CD8-positive, alpha-beta T cell (primary cell): ENCODE measurements at regions of chr11 and their contacts with region 1.

Region 1: GRCh38 chr11:125902927-125903710 is at the start of gene PUS3:
- DNase-seq: peak; percentile 67 to 91 (median 87)
- ATAC-seq: peak; percentile 92
- H3K4me3 ChIP-seq: peak within 1 kb of the TSS; percentile 58 to 77
- H3K4me3 Mint-ChIP-seq: peak within 1 kb of the TSS; percentile 95
- H3K27ac ChIP-seq: peak within 1 kb of the TSS; percentile 48 to 67
- H3K27ac Mint-ChIP-seq: peak within 1 kb of the TSS; percentile 91
- H3K4me1 ChIP-seq: peaks cover 16% of the 10 kb centered on the region
- H3K4me1 Mint-ChIP-seq: peaks cover 41% of the 10 kb centered on the region
- H3K27me3 ChIP-seq: peaks cover 5 to 7% of the 10 kb centered on the region in 2 experiments
- H3K27me3 Mint-ChIP-seq: peaks cover 19% of the 10 kb centered on the region
- CTCF ChIP-seq: no peak
- total RNA-seq, gene PUS3: 4.5 to 5.2 TPM

Region 2: DNA sequence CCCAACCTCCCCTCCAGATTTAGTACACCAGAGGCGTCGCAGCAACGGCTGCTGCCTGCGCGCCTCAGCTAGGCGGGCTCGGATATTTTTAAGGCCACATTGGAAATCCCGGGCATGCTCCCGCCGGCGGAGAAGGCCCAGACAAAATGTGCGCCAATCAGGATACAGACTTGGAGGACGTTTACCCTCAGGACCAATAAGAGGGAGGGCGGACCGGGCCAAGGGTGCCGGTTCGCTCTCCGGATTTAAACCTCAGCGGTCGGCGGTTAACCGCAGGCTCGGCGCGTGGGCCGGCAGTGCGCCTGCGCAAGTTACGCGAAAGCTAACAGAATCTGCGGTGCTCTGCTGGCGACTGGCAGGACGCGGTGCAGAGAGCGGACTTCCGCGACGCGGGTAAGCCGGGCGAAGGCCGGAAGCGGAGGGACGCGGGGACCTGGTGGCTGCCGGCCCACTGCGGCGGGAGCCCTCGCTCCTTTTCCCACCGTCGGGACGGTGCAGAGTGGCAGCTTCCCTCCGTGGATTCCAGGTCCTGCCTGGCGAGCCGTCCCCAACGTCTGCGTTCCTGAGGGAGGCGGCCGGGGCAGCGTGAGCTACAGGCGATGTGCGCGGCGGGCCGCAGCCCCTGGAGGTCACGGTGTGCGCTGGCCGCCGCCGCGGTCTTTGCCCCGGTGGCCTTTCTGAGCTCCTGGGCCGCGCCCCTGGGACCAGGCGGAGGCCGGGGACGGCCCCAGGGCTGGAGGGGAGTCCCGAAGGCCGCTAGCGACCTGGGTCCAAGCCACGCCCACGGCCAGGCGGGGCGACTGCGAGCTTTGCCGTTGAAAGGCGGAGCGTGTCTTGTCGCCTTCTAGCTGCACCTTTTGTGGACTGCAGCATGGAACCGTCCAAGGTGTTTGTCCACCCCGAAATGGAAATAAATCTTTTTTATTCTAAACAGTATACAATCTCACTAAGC is 15.5 kb before region 1 on chr11 and contains the start of gene HYLS1:
- CTCF ChIA-PET with region 1: interaction called, 4 read pairs
- POLR2A ChIA-PET with region 1: interaction called, 19 read pairs
- intact Hi-C with region 1: loop called (anchors 1 kb)
- DNase-seq: peak; percentile 87 to 97 (median 94)
- ATAC-seq: peak; percentile 88
- H3K4me3 ChIP-seq: peak within 1 kb of the TSS; percentile 81 to 84
- H3K4me3 Mint-ChIP-seq: peak within 1 kb of the TSS; percentile 88
- H3K27ac ChIP-seq: peak within 1 kb of the TSS; percentile 61 to 87
- H3K27ac Mint-ChIP-seq: peak within 1 kb of the TSS; percentile 87
- H3K4me1 ChIP-seq: peaks cover 10% of the 10 kb centered on the region
- H3K4me1 Mint-ChIP-seq: peaks cover 31% of the 10 kb centered on the region
- H3K27me3 ChIP-seq: no peaks in the 10 kb centered on the region
- H3K27me3 Mint-ChIP-seq: no peaks in the 10 kb centered on the region
- CTCF ChIP-seq: no peak
- total RNA-seq, gene HYLS1: 1.1 to 1.2 TPM